CD4-positive, alpha-beta memory T cell (primary cell): ENCODE measurements at regions of chr7 and their contacts with region 1.

Region 1: GRCh38 chr7:25093268-25093826 is 31.7 kb downstream of the CYCS start:
- DNase-seq: peak; percentile 63 to 71 (median 68)
- H3K4me3 ChIP-seq: no peak overlapping the region
- H3K4me3 Mint-ChIP-seq: no peak overlapping the region
- H3K27ac ChIP-seq: no peak overlapping the region
- H3K27ac Mint-ChIP-seq: peak overlapping the region in 2 of 7 donors; percentile 6 to 74
- H3K4me1 ChIP-seq: peaks cover 3% of the 10 kb centered on the region
- H3K4me1 Mint-ChIP-seq: peaks cover 6 to 14% (median 8%) of the 10 kb centered on the region in 4 donors
- H3K27me3 ChIP-seq: no peaks in the 10 kb centered on the region
- H3K27me3 Mint-ChIP-seq: peaks cover 0 to 3% of the 10 kb centered on the region in 2 donors

Region 2: GRCh38 chr7:24069751-24070150 is 1023.6 kb before region 1 on chr7:
- CTCF ChIA-PET with region 1: no interaction called
- POLR2A ChIA-PET with region 1: no interaction called
- intact Hi-C with region 1: no loop called
- DNase-seq: no peak
- H3K4me3 ChIP-seq: no peak overlapping the region
- H3K4me3 Mint-ChIP-seq: no peak overlapping the region
- H3K27ac ChIP-seq: no peak overlapping the region
- H3K27ac Mint-ChIP-seq: no peak overlapping the region
- H3K4me1 ChIP-seq: no peaks in the 10 kb centered on the region
- H3K4me1 Mint-ChIP-seq: peaks cover 0 to 11% (median 8%) of the 10 kb centered on the region in 4 donors
- H3K27me3 ChIP-seq: no peaks in the 10 kb centered on the region
- H3K27me3 Mint-ChIP-seq: peaks cover 0 to 6% of the 10 kb centered on the region in 2 donors

Region 3: DNA sequence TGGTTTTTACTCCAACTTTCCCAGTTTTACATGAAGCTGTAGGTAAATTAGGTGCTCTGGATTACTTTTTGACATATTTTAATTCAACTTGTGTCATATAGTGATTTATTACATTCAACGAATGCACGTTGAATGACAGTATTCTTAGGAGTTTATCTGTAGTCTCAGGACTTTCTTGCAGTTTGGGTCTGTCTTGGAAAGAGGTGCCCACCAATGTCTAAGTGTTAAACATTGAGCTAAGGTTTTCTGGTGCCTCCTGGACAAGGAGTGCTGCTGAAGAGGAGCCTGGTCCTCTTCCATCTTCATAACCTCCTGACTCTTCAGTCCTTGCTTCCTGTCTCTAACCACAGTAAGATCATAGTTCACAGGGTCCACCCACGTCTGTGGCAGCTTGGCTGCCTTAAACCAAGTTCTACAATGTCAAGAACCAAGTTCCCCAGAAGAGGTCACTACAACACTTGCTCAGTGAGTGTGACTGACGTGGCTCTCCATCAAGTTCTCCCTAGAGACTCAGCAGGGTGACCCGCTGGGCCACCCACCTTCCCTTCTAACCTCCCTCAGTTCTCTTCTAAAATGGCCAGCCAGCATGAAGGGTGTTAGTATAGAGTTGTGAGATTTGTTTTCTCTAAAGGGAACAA is 803.2 kb before region 1 on chr7:
- CTCF ChIA-PET with region 1: no interaction called
- POLR2A ChIA-PET with region 1: no interaction called
- intact Hi-C with region 1: loop called (anchors 5 kb)
- DNase-seq: peak in 4 of 5 donors; percentile 24 to 37 (median 32)
- H3K4me3 ChIP-seq: no peak overlapping the region
- H3K4me3 Mint-ChIP-seq: no peak overlapping the region
- H3K27ac ChIP-seq: no peak overlapping the region
- H3K27ac Mint-ChIP-seq: no peak overlapping the region
- H3K4me1 ChIP-seq: peaks cover 13% of the 10 kb centered on the region
- H3K4me1 Mint-ChIP-seq: peaks cover 6 to 13% (median 7%) of the 10 kb centered on the region in 4 donors
- H3K27me3 ChIP-seq: peaks cover 7% of the 10 kb centered on the region
- H3K27me3 Mint-ChIP-seq: peaks cover 23 to 25% of the 10 kb centered on the region in 2 donors

Region 4: DNA sequence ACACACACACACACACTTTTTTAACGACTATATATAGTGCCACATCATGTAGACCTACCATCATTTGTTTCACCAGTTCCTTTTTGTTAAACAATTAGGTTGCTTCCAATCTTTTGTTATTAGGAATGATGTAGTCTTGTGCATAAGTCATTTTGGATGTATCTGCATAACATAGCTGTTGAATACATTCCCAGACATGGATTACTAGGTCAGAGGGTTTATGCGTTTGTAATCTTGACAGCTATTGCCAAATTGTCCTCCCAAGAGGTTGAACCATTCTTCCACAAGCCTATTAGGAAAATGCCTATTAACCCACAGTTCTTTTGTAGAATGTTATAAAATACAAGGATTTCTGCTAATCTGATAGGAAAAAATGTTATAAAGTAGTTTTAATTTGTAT is 432.8 kb before region 1 on chr7:
- CTCF ChIA-PET with region 1: no interaction called
- POLR2A ChIA-PET with region 1: no interaction called
- intact Hi-C with region 1: no loop called
- DNase-seq: no peak
- H3K4me3 ChIP-seq: no peak overlapping the region
- H3K4me3 Mint-ChIP-seq: no peak overlapping the region
- H3K27ac ChIP-seq: no peak overlapping the region
- H3K27ac Mint-ChIP-seq: no peak overlapping the region
- H3K4me1 ChIP-seq: no peaks in the 10 kb centered on the region
- H3K4me1 Mint-ChIP-seq: no peaks in the 10 kb centered on the region
- H3K27me3 ChIP-seq: no peaks in the 10 kb centered on the region
- H3K27me3 Mint-ChIP-seq: no peaks in the 10 kb centered on the region

Region 5: DNA sequence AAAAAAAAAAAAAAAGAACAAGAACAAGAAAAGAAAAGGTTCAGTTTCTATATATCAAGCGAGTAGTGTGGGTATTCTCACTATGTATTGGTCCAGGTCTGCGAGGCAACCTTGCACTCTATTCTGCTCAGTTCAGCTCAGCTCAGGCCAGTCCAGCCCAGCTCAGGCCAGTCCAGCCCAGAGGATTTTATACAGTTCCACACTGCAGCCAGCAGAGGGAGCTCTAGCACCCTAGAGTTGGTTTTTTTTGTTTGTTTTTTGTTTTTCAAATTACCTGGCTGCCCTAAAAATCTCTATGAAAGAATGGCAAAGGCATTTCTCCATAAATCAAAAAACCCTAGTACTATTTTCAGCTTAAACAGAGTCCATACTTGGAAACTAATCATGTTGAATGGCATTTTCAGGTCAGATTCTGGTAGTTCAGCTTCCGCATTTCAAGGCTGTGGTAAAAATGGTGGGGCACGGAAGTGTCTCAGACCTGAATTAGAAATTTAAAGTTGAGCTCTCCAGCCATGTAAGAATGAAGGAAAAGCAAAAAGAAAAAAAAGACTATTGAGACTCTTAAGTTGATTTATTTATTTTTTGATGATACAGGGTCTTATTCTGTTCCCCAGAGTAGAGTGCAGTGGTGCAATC is 280.9 kb before region 1 on chr7:
- CTCF ChIA-PET with region 1: interaction called, 414 read pairs
- POLR2A ChIA-PET with region 1: interaction called, 8 read pairs
- intact Hi-C with region 1: loop called (anchors 1 kb)
- DNase-seq: peak; percentile 25 to 49 (median 38)
- H3K4me3 ChIP-seq: no peak overlapping the region
- H3K4me3 Mint-ChIP-seq: no peak overlapping the region
- H3K27ac ChIP-seq: no peak overlapping the region
- H3K27ac Mint-ChIP-seq: peak overlapping the region in 2 of 7 donors; percentile 22 to 23
- H3K4me1 ChIP-seq: no peaks in the 10 kb centered on the region
- H3K4me1 Mint-ChIP-seq: peaks cover 0 to 3% (median under 1%) of the 10 kb centered on the region in 4 donors
- H3K27me3 ChIP-seq: no peaks in the 10 kb centered on the region
- H3K27me3 Mint-ChIP-seq: no peaks in the 10 kb centered on the region

Region 6: GRCh38 chr7:24991353-24991752 is 102.0 kb before region 1 on chr7:
- CTCF ChIA-PET with region 1: interaction called, 11 read pairs
- POLR2A ChIA-PET with region 1: no interaction called
- intact Hi-C with region 1: no loop called
- DNase-seq: no peak
- H3K4me3 ChIP-seq: no peak overlapping the region
- H3K4me3 Mint-ChIP-seq: no peak overlapping the region
- H3K27ac ChIP-seq: no peak overlapping the region
- H3K27ac Mint-ChIP-seq: no peak overlapping the region
- H3K4me1 ChIP-seq: no peaks in the 10 kb centered on the region
- H3K4me1 Mint-ChIP-seq: no peaks in the 10 kb centered on the region
- H3K27me3 ChIP-seq: no peaks in the 10 kb centered on the region
- H3K27me3 Mint-ChIP-seq: no peaks in the 10 kb centered on the region

Region 7: DNA sequence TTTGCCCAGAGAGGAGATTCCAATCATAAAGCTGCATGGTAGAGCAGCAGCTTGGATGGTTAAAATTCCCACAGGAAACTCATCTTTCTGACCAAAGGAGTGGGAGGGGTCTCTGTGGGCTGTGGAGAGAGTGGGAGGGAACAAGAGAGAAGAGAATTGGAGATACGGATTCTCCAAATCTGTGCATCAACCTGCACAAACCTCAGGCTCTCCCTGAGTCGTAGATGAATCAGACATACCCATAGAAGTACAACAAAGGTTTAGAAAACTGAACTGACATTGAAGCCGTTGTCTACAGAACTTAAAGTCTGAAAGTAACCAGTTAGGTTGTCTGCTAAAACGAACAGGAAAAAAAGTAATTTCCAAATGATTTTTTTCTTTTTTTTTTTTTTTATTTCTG is 10.1 kb before region 1 on chr7:
- CTCF ChIA-PET with region 1: interaction called, 32 read pairs
- POLR2A ChIA-PET with region 1: no interaction called
- intact Hi-C with region 1: no loop called
- DNase-seq: no peak
- H3K4me3 ChIP-seq: no peak overlapping the region
- H3K4me3 Mint-ChIP-seq: no peak overlapping the region
- H3K27ac ChIP-seq: no peak overlapping the region
- H3K27ac Mint-ChIP-seq: no peak overlapping the region
- H3K4me1 ChIP-seq: no peaks in the 10 kb centered on the region
- H3K4me1 Mint-ChIP-seq: no peaks in the 10 kb centered on the region
- H3K27me3 ChIP-seq: no peaks in the 10 kb centered on the region
- H3K27me3 Mint-ChIP-seq: peaks cover 4% of the 10 kb centered on the region in 2 donors

Region 8: GRCh38 chr7:25167262-25167843 is 74.0 kb after region 1 on chr7:
- CTCF ChIA-PET with region 1: interaction called, 3 read pairs
- POLR2A ChIA-PET with region 1: no interaction called
- intact Hi-C with region 1: loop called (anchors 5 kb)
- DNase-seq: no peak
- H3K4me3 ChIP-seq: no peak overlapping the region
- H3K4me3 Mint-ChIP-seq: no peak overlapping the region
- H3K27ac ChIP-seq: no peak overlapping the region
- H3K27ac Mint-ChIP-seq: peak overlapping the region in 1 of 7 donors; percentile 37
- H3K4me1 ChIP-seq: no peaks in the 10 kb centered on the region
- H3K4me1 Mint-ChIP-seq: no peaks in the 10 kb centered on the region
- H3K27me3 ChIP-seq: no peaks in the 10 kb centered on the region
- H3K27me3 Mint-ChIP-seq: no peaks in the 10 kb centered on the region